CD4-positive, alpha-beta memory T cell (primary cell): ENCODE measurements at regions of chr5 and their contacts with region 1.

Region 1: GRCh38 chr5:148820461-148821395 is 5.7 kb upstream of the ADRB2 start:
- DNase-seq: peak in 4 of 5 donors; percentile 16 to 42 (median 32)
- H3K4me3 ChIP-seq: no peak overlapping the region
- H3K4me3 Mint-ChIP-seq: no peak overlapping the region
- H3K27ac ChIP-seq: no peak overlapping the region
- H3K27ac Mint-ChIP-seq: no peak overlapping the region
- H3K4me1 ChIP-seq: peaks cover 7% of the 10 kb centered on the region
- H3K4me1 Mint-ChIP-seq: peaks cover 6 to 16% (median 8%) of the 10 kb centered on the region in 4 donors
- H3K27me3 ChIP-seq: no peaks in the 10 kb centered on the region
- H3K27me3 Mint-ChIP-seq: peaks cover 0 to 1% of the 10 kb centered on the region in 2 donors

Region 2: DNA sequence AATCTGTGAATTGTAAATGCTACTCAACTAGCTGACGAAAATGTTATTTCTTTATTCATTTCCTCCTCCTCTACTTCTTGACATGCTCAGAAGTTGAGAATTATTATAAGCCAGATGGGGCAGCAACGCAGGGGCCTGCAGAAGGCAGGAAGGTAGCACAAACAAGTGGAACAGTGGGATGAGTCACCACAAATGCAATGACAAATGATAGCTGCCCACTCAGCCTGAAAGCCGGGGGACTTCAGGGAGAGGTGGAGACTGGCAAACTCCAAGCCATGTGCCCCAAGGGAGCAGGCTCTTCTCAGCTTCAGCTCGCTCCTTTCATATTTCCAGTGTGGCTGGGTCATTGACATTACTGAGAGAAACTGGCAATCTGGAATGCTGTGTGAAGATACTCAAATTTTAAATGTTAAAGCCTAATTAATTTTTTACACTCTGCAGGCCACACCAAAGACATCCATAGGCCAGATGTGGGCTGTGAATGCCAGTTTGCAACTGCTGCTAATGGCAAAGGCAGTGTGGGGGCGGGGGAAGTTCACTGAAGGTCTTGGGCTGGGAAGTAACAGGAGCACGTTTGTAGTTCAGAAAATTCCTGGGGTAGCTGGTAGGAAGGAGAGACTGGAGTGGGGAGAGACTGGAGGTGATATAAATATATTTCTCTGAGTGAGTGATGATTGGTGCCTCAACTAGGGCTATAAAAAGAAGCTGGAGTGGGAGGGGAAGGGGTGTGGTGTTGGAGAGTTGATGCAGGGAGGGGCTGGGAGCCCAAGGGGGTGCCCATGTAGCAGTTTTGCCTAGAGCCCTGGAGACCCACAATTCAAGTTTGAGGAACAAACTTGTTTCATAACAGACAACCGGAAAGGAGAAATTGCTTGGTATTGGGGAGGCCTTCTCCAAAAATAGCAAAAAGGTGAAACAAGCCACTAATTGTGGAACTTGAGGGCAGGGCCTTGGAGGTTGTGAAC is 15.1 kb before region 1 on chr5:
- CTCF ChIA-PET with region 1: interaction called, 18 read pairs
- POLR2A ChIA-PET with region 1: interaction called, 28 read pairs
- intact Hi-C with region 1: no loop called
- DNase-seq: no peak
- H3K4me3 ChIP-seq: no peak overlapping the region
- H3K4me3 Mint-ChIP-seq: peak overlapping the region in 1 of 8 donors; percentile 51
- H3K27ac ChIP-seq: no peak overlapping the region
- H3K27ac Mint-ChIP-seq: peak overlapping the region in 2 of 7 donors; percentile 23 to 43
- H3K4me1 ChIP-seq: peaks cover 24% of the 10 kb centered on the region
- H3K4me1 Mint-ChIP-seq: peaks cover 17 to 33% (median 25%) of the 10 kb centered on the region in 4 donors
- H3K27me3 ChIP-seq: no peaks in the 10 kb centered on the region
- H3K27me3 Mint-ChIP-seq: peaks cover 4 to 12% of the 10 kb centered on the region in 2 donors

Region 3: GRCh38 chr5:148952097-148952867 is 131.6 kb after region 1 on chr5:
- CTCF ChIA-PET with region 1: interaction called, 77 read pairs
- POLR2A ChIA-PET with region 1: interaction called, 9 read pairs
- intact Hi-C with region 1: loop called (anchors 1 kb)
- DNase-seq: no peak
- H3K4me3 ChIP-seq: no peak overlapping the region
- H3K4me3 Mint-ChIP-seq: no peak overlapping the region
- H3K27ac ChIP-seq: no peak overlapping the region
- H3K27ac Mint-ChIP-seq: no peak overlapping the region
- H3K4me1 ChIP-seq: no peaks in the 10 kb centered on the region
- H3K4me1 Mint-ChIP-seq: peaks cover 0 to 3% (median under 1%) of the 10 kb centered on the region in 4 donors
- H3K27me3 ChIP-seq: no peaks in the 10 kb centered on the region
- H3K27me3 Mint-ChIP-seq: peaks cover 0 to 1% of the 10 kb centered on the region in 2 donors

Region 4: DNA sequence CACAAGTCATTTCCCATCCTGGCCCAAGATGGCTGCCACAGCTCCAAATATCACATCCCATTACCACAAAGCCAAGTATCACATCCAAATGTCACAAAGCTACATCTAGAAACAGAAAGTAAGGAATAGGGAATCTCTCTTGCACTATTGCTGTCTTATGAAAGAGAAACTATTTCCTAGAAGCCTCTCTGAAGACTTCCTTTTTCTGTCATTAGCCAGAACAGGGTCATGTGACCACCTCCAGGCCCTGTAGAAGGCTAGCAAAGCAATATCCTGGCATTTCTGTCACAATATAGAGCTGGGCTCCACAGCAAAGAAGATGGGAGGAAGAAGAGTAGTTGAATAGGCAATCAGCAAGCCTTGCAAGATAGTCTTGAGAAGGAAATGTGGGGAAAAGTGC is 142.9 kb after region 1 on chr5:
- CTCF ChIA-PET with region 1: interaction called, 77 read pairs
- POLR2A ChIA-PET with region 1: interaction called, 9 read pairs
- intact Hi-C with region 1: no loop called
- DNase-seq: no peak
- H3K4me3 ChIP-seq: no peak overlapping the region
- H3K4me3 Mint-ChIP-seq: peak overlapping the region in 1 of 8 donors; percentile 18
- H3K27ac ChIP-seq: no peak overlapping the region
- H3K27ac Mint-ChIP-seq: no peak overlapping the region
- H3K4me1 ChIP-seq: peaks cover 5% of the 10 kb centered on the region
- H3K4me1 Mint-ChIP-seq: peaks cover 3 to 6% (median 4%) of the 10 kb centered on the region in 4 donors
- H3K27me3 ChIP-seq: no peaks in the 10 kb centered on the region
- H3K27me3 Mint-ChIP-seq: peaks cover 4 to 5% of the 10 kb centered on the region in 2 donors

Region 5: GRCh38 chr5:149035372-149035790 is 214.7 kb after region 1 on chr5:
- CTCF ChIA-PET with region 1: interaction called, 3 read pairs
- POLR2A ChIA-PET with region 1: no interaction called
- intact Hi-C with region 1: loop called (anchors 1 kb)
- DNase-seq: peak; percentile 55 to 66 (median 57)
- H3K4me3 ChIP-seq: no peak overlapping the region
- H3K4me3 Mint-ChIP-seq: peak overlapping the region in 1 of 8 donors; percentile 22
- H3K27ac ChIP-seq: no peak overlapping the region
- H3K27ac Mint-ChIP-seq: peak overlapping the region in 1 of 7 donors; percentile 27
- H3K4me1 ChIP-seq: peaks cover 10% of the 10 kb centered on the region
- H3K4me1 Mint-ChIP-seq: peaks cover 3 to 38% (median 19%) of the 10 kb centered on the region in 4 donors
- H3K27me3 ChIP-seq: no peaks in the 10 kb centered on the region
- H3K27me3 Mint-ChIP-seq: peaks cover 0 to 3% of the 10 kb centered on the region in 2 donors